ENCODE measurements at regions of chr9 and their contacts with region 1.

Region 1: DNA sequence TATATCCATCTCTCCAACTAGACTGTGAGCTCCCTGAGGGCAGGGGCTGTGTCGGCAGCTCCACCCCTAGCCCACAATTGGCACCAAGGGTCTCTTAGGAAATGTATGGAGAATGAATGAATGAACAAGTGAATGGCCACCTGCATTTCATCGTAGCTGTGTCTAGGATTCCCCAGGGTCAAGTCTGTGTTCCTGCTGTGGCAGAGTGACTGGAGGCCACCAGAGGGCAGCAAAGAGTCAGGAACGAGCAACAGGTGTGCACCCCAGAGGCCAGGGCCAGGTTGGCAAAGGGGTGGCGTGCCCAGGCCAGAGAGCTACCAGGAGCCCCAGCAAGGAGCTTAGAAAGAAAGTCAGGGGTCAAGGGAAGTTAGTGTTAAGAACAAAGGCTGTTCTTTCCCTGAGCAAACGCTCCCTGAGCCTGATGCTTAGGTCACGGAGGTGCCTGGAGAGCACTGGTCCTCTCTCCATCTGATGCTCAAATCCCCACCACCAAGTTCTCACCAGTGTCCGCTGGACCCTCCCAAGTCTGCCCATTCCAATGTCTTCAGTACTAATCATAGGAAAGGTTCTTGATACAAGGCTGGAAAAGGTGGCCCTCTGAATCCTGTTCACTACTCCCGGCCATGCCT is 160.7 kb downstream of the PAX5 start:
- DNase-seq: peak; percentile 83
- ATAC-seq: peak; percentile 88
- H3K4me3 ChIP-seq: no peak overlapping the region
- H3K4me3 Mint-ChIP-seq: no peak overlapping the region
- H3K27ac ChIP-seq: peak overlapping the region; percentile 41 to 71
- H3K27ac Mint-ChIP-seq: peak overlapping the region; percentile 94
- H3K4me1 ChIP-seq: peaks cover 30 to 52% of the 10 kb centered on the region in 2 donors
- H3K4me1 Mint-ChIP-seq: peaks cover 66% of the 10 kb centered on the region
- H3K27me3 ChIP-seq: no peaks in the 10 kb centered on the region
- H3K27me3 Mint-ChIP-seq: no peaks in the 10 kb centered on the region
- CTCF ChIP-seq: peak; percentile 89

Region 2: DNA sequence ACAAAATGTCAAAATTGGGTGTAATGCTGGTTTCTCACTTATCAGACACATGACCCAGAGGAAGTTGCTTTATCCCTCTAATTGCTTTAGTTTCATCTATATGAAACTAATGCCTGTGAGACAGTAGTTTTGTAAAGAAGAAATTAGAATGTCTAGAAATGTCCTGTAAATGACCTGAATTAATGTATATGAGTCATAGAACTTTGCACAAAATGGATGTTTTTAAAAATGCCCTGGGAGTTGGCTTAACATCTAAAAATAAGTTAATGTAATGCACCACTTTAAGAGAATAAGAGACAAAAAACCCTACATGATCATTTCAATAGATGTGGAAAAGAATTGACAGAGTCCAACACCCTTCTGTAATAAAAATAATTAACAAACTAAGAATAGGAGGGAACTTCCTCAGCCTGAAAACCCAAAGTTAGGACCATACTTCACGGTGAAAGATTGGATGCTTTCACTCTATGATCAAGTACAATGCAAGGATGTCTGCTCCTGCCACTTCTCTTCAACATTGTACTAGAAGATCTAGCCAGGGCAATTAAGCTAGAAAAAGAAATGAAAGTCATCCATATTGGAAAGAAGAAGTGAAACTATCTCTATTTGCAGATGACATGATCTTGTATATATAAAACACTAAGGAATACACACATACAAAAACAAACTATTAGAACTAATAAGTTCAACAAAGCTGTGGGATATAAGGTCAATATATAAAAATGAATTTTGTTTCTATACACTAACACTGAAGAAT is 182.8 kb before region 1 on chr9:
- CTCF ChIA-PET with region 1: no interaction called
- POLR2A ChIA-PET with region 1: no interaction called
- intact Hi-C with region 1: no loop called
- DNase-seq: peak; percentile 48
- ATAC-seq: peak; percentile 45
- H3K4me3 ChIP-seq: no peak overlapping the region
- H3K4me3 Mint-ChIP-seq: no peak overlapping the region
- H3K27ac ChIP-seq: no peak overlapping the region
- H3K27ac Mint-ChIP-seq: peak overlapping the region; percentile 33
- H3K4me1 ChIP-seq: peaks cover 9 to 10% of the 10 kb centered on the region in 2 donors
- H3K4me1 Mint-ChIP-seq: peaks cover 18% of the 10 kb centered on the region
- H3K27me3 ChIP-seq: no peaks in the 10 kb centered on the region
- H3K27me3 Mint-ChIP-seq: peaks cover 7% of the 10 kb centered on the region
- CTCF ChIP-seq: no peak

Region 3: GRCh38 chr9:36903541-36904435 is 30.4 kb after region 1 on chr9:
- CTCF ChIA-PET with region 1: interaction called, 18 read pairs
- POLR2A ChIA-PET with region 1: no interaction called
- intact Hi-C with region 1: loop called (anchors 1 kb)
- DNase-seq: no peak
- ATAC-seq: peak; percentile 41
- H3K4me3 ChIP-seq: no peak overlapping the region
- H3K4me3 Mint-ChIP-seq: no peak overlapping the region
- H3K27ac ChIP-seq: peak overlapping the region in 1 of 2 donors; percentile 52
- H3K27ac Mint-ChIP-seq: peak overlapping the region; percentile 78
- H3K4me1 ChIP-seq: peaks cover 0 to 25% of the 10 kb centered on the region in 2 donors
- H3K4me1 Mint-ChIP-seq: peaks cover 50% of the 10 kb centered on the region
- H3K27me3 ChIP-seq: no peaks in the 10 kb centered on the region
- H3K27me3 Mint-ChIP-seq: no peaks in the 10 kb centered on the region
- CTCF ChIP-seq: no peak

Region 4: GRCh38 chr9:36974731-36975130 is 101.4 kb after region 1 on chr9:
- CTCF ChIA-PET with region 1: interaction called, 17 read pairs
- POLR2A ChIA-PET with region 1: interaction called, 5 read pairs
- intact Hi-C with region 1: no loop called
- DNase-seq: no peak
- ATAC-seq: no peak
- H3K4me3 ChIP-seq: no peak overlapping the region
- H3K4me3 Mint-ChIP-seq: no peak overlapping the region
- H3K27ac ChIP-seq: peak overlapping the region in 1 of 2 donors; percentile 40
- H3K27ac Mint-ChIP-seq: peak overlapping the region; percentile 87
- H3K4me1 ChIP-seq: peaks cover 19 to 59% of the 10 kb centered on the region in 2 donors
- H3K4me1 Mint-ChIP-seq: peaks cover 69% of the 10 kb centered on the region
- H3K27me3 ChIP-seq: no peaks in the 10 kb centered on the region
- H3K27me3 Mint-ChIP-seq: no peaks in the 10 kb centered on the region
- CTCF ChIP-seq: no peak

Region 5: GRCh38 chr9:37004424-37004935 is 131.1 kb after region 1 on chr9:
- CTCF ChIA-PET with region 1: interaction called, 10 read pairs
- POLR2A ChIA-PET with region 1: no interaction called
- intact Hi-C with region 1: no loop called
- DNase-seq: peak; percentile 78
- ATAC-seq: peak; percentile 46
- H3K4me3 ChIP-seq: peak overlapping the region; percentile 28 to 77 (median 61)
- H3K4me3 Mint-ChIP-seq: peak overlapping the region; percentile 75
- H3K27ac ChIP-seq: peak overlapping the region; percentile 77 to 83
- H3K27ac Mint-ChIP-seq: peak overlapping the region; percentile 99
- H3K4me1 ChIP-seq: peaks cover 97% of the 10 kb centered on the region in 2 donors
- H3K4me1 Mint-ChIP-seq: peaks cover 93% of the 10 kb centered on the region
- H3K27me3 ChIP-seq: no peaks in the 10 kb centered on the region
- H3K27me3 Mint-ChIP-seq: no peaks in the 10 kb centered on the region
- CTCF ChIP-seq: no peak

Region 6: DNA sequence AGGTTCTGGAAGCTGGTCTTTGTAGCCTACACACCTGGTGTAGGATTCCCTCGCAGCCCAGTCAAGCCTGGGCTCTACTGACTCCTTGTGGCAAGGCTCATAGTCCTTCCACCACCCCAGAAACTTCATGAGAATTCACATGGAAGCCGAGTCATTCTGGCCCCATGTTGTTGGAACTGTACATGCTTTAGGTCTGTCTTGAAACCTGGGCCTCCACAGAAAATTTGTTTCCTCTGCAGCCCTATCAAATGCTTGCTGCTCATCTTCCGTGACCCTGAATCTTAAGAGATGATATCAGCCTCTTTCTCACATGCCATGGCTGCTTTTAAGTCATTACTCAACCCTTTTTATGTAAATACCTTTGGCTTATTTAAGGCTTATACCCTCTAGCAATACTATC is 435.8 kb after region 1 on chr9:
- CTCF ChIA-PET with region 1: interaction called, 40 read pairs
- POLR2A ChIA-PET with region 1: no interaction called
- intact Hi-C with region 1: loop called (anchors 1 kb)
- DNase-seq: peak; percentile 77
- ATAC-seq: peak; percentile 82
- H3K4me3 ChIP-seq: no peak overlapping the region
- H3K4me3 Mint-ChIP-seq: peak overlapping the region; percentile 16
- H3K27ac ChIP-seq: peak overlapping the region; percentile 5 to 64
- H3K27ac Mint-ChIP-seq: peak overlapping the region; percentile 84
- H3K4me1 ChIP-seq: peaks cover 27 to 42% of the 10 kb centered on the region in 2 donors
- H3K4me1 Mint-ChIP-seq: peaks cover 35% of the 10 kb centered on the region
- H3K27me3 ChIP-seq: no peaks in the 10 kb centered on the region
- H3K27me3 Mint-ChIP-seq: no peaks in the 10 kb centered on the region
- CTCF ChIP-seq: peak; percentile 76

Region 7: GRCh38 chr9:37415011-37415719 is 541.8 kb after region 1 on chr9:
- CTCF ChIA-PET with region 1: interaction called, 20 read pairs
- POLR2A ChIA-PET with region 1: no interaction called
- intact Hi-C with region 1: no loop called
- DNase-seq: peak; percentile 86
- ATAC-seq: peak; percentile 84
- H3K4me3 ChIP-seq: no peak overlapping the region
- H3K4me3 Mint-ChIP-seq: peak overlapping the region; percentile 67
- H3K27ac ChIP-seq: no peak overlapping the region
- H3K27ac Mint-ChIP-seq: peak overlapping the region; percentile 79
- H3K4me1 ChIP-seq: peaks cover 32 to 45% of the 10 kb centered on the region in 2 donors
- H3K4me1 Mint-ChIP-seq: peaks cover 42% of the 10 kb centered on the region
- H3K27me3 ChIP-seq: no peaks in the 10 kb centered on the region
- H3K27me3 Mint-ChIP-seq: no peaks in the 10 kb centered on the region
- CTCF ChIP-seq: peak; percentile 83